Spleen (tissue), 13 donors: ENCODE measurements at regions of chr5 and their contacts with region 1.

Region 1: GRCh38 chr5:923281-923873 is 30.7 kb downstream of the TRIP13 start:
- DNase-seq: peak; percentile 92
- H3K4me3 ChIP-seq: no peak overlapping the region
- H3K27ac ChIP-seq: no peak overlapping the region
- H3K4me1 ChIP-seq: peaks cover 0 to 22% (median 13%) of the 10 kb centered on the region in 6 donors
- H3K27me3 ChIP-seq: peaks cover 0 to 41% (median 15%) of the 10 kb centered on the region in 7 donors
- CTCF ChIP-seq: peak; percentile 40 to 92 (median 81)
- POLR2A ChIP-seq: no peak

Region 2: DNA sequence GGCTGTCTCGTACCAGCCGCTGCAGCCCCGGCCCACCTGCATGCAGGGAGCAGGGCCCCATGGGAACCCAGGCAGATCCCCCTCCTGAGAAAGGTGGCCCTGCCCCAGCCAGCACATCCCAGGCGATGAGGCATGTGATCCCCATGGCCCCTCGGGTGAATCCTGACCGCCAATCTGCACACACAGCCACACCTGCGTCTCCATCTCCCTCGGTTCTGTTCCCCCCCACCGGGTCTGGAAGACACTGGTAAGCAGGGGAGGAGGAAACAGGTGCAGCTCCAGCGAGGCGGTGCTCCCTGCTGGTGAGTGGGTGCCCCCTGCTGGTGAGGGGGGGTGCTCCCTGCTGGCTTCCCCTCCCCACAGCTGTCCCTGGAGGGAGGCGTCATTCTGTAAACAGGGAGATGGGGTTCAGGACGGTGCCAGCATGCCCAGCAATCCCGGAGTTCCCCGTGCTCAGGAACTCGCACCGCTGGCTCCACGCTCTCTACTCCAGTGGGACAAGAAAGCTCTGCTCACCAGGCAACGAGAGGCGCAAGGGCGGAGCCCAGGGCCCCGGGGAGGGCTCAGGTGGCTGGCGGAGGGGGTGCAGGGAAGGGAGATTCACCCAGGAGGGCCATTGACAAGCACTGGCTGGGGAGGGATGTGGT is 216.9 kb after region 1 on chr5:
- intact Hi-C with region 1: loop called (anchors 5 kb)
- DNase-seq: peak; percentile 92
- H3K4me3 ChIP-seq: peak overlapping the region in 1 of 8 donors; percentile 16
- H3K27ac ChIP-seq: peak overlapping the region in 1 of 8 donors; percentile 56
- H3K4me1 ChIP-seq: peaks cover 7 to 49% (median 23%) of the 10 kb centered on the region in 6 donors
- H3K27me3 ChIP-seq: peaks cover 0 to 43% (median 0%) of the 10 kb centered on the region in 7 donors
- CTCF ChIP-seq: peak; percentile 66 to 95 (median 86)
- POLR2A ChIP-seq: no peak

Region 3: DNA sequence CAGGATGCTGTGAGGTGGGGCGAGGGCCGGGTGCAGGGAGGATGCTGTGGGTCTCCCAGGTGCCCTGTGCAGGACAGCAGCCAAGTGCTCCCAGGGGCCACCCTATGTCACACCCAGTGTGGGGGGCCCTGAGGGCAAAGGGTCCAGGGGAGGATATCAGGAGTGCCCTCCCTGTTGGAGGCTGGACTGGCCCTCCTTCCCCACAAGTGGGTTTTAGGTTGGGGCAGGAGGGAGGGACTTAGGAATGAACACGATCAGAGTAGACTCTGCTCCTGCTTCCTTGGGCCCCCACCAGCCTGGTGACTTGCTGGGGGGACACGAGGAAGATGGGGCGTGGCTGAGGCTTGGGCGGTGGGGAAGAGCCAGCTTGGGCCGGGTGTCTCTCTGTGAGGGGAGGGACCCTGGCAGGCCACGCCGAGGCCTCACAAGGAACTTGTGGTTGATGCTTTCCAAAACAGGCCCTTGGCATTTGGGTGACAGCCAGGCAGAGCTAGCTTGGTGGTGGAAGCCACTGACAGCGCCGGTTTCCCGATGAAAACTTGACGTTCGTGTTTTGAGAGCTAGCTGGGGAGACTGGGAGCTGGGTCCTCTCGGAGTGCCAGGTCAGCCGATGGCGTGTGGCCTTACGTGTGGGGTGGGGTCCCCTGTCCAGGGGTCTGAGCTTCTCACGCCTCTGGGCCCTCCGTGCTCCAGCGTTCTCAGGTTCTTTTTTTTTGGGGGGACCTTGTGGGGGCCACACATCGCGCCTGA is 729.4 kb after region 1 on chr5:
- intact Hi-C with region 1: loop called (anchors 10 kb)
- DNase-seq: no peak
- H3K4me3 ChIP-seq: peak overlapping the region in 1 of 8 donors; percentile 46
- H3K27ac ChIP-seq: no peak overlapping the region
- H3K4me1 ChIP-seq: peaks cover 6 to 22% (median 15%) of the 10 kb centered on the region in 6 donors
- H3K27me3 ChIP-seq: peaks cover 0 to 84% (median 31%) of the 10 kb centered on the region in 7 donors
- CTCF ChIP-seq: no peak
- POLR2A ChIP-seq: no peak